K562 (cell line): ENCODE measurements at regions of chr12 and their contacts with region 1.

Region 1: DNA sequence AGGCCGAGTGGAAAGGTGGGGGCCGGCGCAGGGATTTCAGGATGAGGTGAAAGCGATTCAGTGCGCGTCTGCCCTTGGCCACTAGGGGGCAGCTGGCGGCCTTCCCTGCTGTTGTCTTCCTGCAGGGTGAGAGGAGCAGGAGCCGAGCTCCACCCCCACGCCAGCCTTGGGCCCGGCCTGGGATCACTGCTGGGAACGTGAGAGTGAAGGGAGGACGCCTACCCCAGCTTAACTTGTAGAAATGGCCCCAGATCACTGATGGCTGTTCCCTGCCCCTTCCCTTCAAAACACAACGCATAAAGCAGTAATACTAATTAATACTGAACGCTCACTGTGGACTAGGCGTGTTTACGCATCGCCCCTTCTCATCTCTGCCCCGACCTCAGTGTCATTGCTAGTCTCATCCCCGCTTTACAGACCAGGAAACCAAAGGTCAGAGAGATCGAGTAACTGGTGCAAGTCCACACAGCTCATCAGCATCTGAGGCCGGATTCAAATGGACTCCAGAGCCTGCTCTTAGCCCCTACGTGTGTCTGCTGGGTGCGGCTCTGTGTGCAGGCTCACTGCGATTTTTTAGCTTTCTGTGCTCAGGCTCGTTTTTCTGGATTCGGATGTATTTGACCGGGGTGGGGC is 24.3 kb downstream of the MVK start:
- DNase-seq: peak; percentile 85 to 93 (median 89)
- ATAC-seq: peak; percentile 97
- H3K4me3 ChIP-seq: no peak overlapping the region
- H3K27ac ChIP-seq: no peak overlapping the region
- H3K4me1 ChIP-seq: peaks cover 4 to 18% of the 10 kb centered on the region in 2 experiments; a peak in 3 of 5 replicates
- H3K27me3 ChIP-seq: peaks cover 0 to 12% of the 10 kb centered on the region in 2 experiments; a peak in 1 of 5 replicates
- CTCF ChIP-seq: peak; percentile 91 to 93 (median 93)
- EP300 ChIP-seq: no peak
- POLR2A ChIP-seq: peak; percentile 52
- RAD21 ChIP-seq: peak; percentile 68 to 86

Region 2: DNA sequence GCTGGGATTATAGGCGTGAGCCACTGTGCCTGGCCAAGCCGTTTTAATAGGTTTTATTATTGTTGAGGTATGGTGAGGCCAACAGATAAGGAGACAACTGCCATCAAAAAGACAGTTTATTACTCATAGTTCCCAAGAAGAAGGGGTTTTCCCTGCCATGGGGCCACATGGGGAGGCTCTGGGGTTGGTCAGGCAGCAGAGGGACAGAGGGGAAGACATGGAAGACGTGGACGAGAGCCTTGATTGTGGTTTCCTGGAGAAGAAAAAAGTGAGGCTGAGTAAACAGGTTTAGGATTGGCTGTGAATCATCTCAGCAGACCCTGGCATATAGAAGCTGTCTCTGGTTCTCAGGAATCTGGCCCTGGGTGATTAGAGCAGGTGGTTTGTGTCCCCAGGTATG is 358.7 kb before region 1 on chr12:
- CTCF ChIA-PET with region 1: no interaction called
- POLR2A ChIA-PET with region 1: no interaction called
- in situ Hi-C with region 1: no loop called
- intact Hi-C with region 1: no loop called
- DNase-seq: no peak
- ATAC-seq: no peak
- H3K4me3 ChIP-seq: no peak overlapping the region
- H3K27ac ChIP-seq: no peak overlapping the region
- H3K4me1 ChIP-seq: no peaks in the 10 kb centered on the region; a peak in 1 of 5 replicates
- H3K27me3 ChIP-seq: peaks cover 12 to 51% of the 10 kb centered on the region in 2 experiments; a peak in 4 of 5 replicates
- CTCF ChIP-seq: no peak
- EP300 ChIP-seq: no peak
- POLR2A ChIP-seq: no peak
- RAD21 ChIP-seq: no peak

Region 3: GRCh38 chr12:109433618-109434017 is 164.3 kb before region 1 on chr12:
- CTCF ChIA-PET with region 1: no interaction called
- POLR2A ChIA-PET with region 1: no interaction called
- in situ Hi-C with region 1: no loop called
- intact Hi-C with region 1: no loop called
- DNase-seq: peak; percentile 18 to 65 (median 50)
- ATAC-seq: peak; percentile 85
- H3K4me3 ChIP-seq: no peak overlapping the region
- H3K27ac ChIP-seq: no peak overlapping the region
- H3K4me1 ChIP-seq: no peaks in the 10 kb centered on the region; a peak in 2 of 5 replicates
- H3K27me3 ChIP-seq: peaks cover 17 to 40% of the 10 kb centered on the region in 2 experiments; a peak in 4 of 5 replicates
- CTCF ChIP-seq: peak; percentile 42 to 59 (median 53)
- EP300 ChIP-seq: no peak
- POLR2A ChIP-seq: no peak
- RAD21 ChIP-seq: no peak

Region 4: DNA sequence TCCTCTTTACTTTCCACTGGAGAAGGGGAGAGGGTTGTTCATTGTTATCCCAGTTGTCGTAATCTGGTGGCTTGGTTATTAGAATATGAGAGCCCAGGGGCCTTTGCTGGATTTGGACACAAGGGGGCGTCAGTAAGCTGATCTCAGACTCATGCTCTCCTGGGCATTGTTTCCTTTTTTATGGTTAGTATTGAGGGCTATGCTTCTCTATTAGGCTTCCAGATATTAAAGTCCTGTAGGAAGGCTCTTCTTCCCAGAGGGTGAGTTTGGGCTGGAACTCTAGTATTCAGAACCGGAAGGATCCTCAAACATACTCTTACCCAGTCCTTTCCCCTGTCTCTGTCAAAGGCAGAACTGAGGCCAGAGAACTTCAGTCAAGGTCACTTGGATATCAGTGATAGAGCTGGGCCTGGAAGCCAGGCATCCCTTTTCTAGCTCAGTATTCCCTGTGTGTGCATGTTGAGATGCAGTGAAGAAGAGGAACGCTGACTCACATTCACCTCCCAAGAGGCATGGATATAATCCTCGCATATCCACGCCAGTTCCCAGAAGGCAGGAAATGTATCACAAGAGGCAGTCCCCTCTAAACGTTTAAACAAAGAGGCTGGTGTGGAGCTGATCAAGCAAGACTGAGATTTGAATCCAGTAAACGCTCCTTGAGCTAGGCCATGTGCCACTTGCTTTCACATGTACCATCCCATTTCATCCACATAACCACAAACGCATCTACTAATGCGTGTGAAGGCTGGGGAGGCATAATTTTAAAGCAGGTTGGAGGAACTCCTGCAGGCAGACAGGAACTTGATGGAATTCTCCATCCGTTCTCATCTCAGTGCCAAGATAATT is 78.9 kb before region 1 on chr12:
- CTCF ChIA-PET with region 1: no interaction called
- POLR2A ChIA-PET with region 1: no interaction called
- in situ Hi-C with region 1: no loop called
- intact Hi-C with region 1: loop called (anchors 10 kb)
- DNase-seq: peak; percentile 65 to 79 (median 76)
- ATAC-seq: peak; percentile 92
- H3K4me3 ChIP-seq: no peak overlapping the region
- H3K27ac ChIP-seq: no peak overlapping the region
- H3K4me1 ChIP-seq: no peaks in the 10 kb centered on the region
- H3K27me3 ChIP-seq: no peaks in the 10 kb centered on the region
- CTCF ChIP-seq: peak; percentile 78 to 88 (median 82)
- EP300 ChIP-seq: no peak
- POLR2A ChIP-seq: no peak
- RAD21 ChIP-seq: peak; percentile 43 to 68

Region 5: DNA sequence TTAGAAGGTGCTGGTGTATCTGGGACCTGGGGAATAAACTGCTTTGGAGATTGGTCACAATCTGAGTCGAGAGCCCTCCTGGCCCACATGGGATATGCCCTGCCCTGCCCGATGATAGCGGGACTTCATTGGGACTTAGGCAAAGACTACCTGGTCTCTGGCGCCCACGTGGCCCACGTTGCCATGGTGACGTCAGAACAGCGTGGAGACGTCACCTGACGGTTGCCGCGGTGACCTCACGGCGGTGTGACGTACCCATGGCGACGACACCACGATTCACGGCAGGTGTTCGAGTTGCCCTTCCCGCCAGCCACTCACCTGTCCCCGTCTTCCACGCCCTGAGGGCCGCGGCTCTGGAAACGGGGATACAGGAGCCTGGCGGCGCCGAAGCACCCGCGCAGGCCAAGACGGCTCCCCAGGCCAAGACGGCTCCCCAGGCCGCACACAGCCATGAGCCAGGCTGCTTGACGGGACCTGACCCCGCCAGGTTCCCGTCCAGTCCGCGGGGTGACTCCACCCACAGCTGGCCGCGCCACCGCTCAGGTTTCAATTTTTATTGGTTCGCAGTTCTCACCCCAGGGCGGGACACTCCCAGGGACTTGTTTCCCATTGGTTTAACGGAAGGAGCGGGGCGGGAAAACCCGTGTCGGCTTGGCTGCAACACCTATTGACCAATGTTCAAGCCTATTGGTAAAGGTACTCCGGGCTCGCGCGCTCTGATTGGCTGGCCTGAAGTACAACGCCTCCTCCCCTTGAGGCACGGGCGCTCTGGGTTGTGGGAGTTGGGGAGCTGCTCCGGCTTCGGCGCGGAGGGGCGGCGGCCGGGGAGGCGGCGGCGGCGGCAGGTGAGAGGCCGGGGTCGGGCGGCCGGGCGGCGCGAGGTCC is 24.6 kb before region 1 on chr12 and contains the starts of genes MMAB and MVK:
- CTCF ChIA-PET with region 1: no interaction called
- POLR2A ChIA-PET with region 1: interaction called, 11 read pairs
- in situ Hi-C with region 1: no loop called
- intact Hi-C with region 1: no loop called
- DNase-seq: peak; percentile 97 to 99 (median 98)
- ATAC-seq: peak; percentile 98
- H3K4me3 ChIP-seq: peak within 1 kb of the TSS; percentile 70
- H3K27ac ChIP-seq: peak within 1 kb of the TSS; percentile 85
- H3K4me1 ChIP-seq: peaks cover 13 to 14% of the 10 kb centered on the region in 2 experiments; a peak in 4 of 5 replicates
- H3K27me3 ChIP-seq: no peaks in the 10 kb centered on the region
- CTCF ChIP-seq: no peak
- EP300 ChIP-seq: no peak; the same call in 1 of the 2 replicates
- POLR2A ChIP-seq: peak; percentile 94
- RAD21 ChIP-seq: no peak
- polyA plus RNA-seq, gene MMAB: 9.5 to 21.1 TPM
- polyA plus RNA-seq, gene MVK: 0.41 to 1.9 TPM

Region 6: GRCh38 chr12:109713187-109713984 is 115.5 kb after region 1 on chr12 and contains the start of gene FAM222A:
- CTCF ChIA-PET with region 1: no interaction called
- POLR2A ChIA-PET with region 1: no interaction called
- in situ Hi-C with region 1: no loop called
- intact Hi-C with region 1: loop called (anchors 10 kb)
- DNase-seq: peak; percentile 95 to 97 (median 96)
- ATAC-seq: peak; percentile 96
- H3K4me3 ChIP-seq: peak within 1 kb of the TSS; percentile 51
- H3K27ac ChIP-seq: no peak within 1 kb of the TSS
- H3K4me1 ChIP-seq: peaks cover 9 to 36% of the 10 kb centered on the region in 2 experiments; a peak in 4 of 5 replicates
- H3K27me3 ChIP-seq: peaks cover 11 to 27% of the 10 kb centered on the region in 2 experiments; a peak in 4 of 5 replicates
- CTCF ChIP-seq: peak in 1 of 3 experiments; percentile 16; a peak in 2 of 6 replicates
- EP300 ChIP-seq: no peak
- POLR2A ChIP-seq: no peak
- RAD21 ChIP-seq: no peak
- polyA plus RNA-seq, gene FAM222A: 0.03 TPM in 1 of 2 experiments, not detected in the other

Region 7: GRCh38 chr12:109775172-109775881 is 177.4 kb after region 1 on chr12:
- CTCF ChIA-PET with region 1: interaction called, 17 read pairs
- POLR2A ChIA-PET with region 1: interaction called, 5 read pairs
- in situ Hi-C with region 1: loop called (anchors 5 kb)
- intact Hi-C with region 1: loop called (anchors 1 kb)
- DNase-seq: peak; percentile 77 to 86 (median 84)
- ATAC-seq: peak; percentile 96
- H3K4me3 ChIP-seq: no peak overlapping the region
- H3K27ac ChIP-seq: no peak overlapping the region
- H3K4me1 ChIP-seq: peaks cover 0 to 9% of the 10 kb centered on the region in 2 experiments; a peak in 3 of 5 replicates
- H3K27me3 ChIP-seq: peaks cover 2 to 32% of the 10 kb centered on the region in 2 experiments; a peak in 4 of 5 replicates
- CTCF ChIP-seq: peak; percentile 94 to 95 (median 94)
- EP300 ChIP-seq: no peak
- POLR2A ChIP-seq: no peak
- RAD21 ChIP-seq: peak; percentile 81 to 95